Heart right ventricle (tissue), 16 donors: ENCODE measurements at regions of chr15 and their contacts with region 1.

Region 1: GRCh38 chr15:74768771-74769342 is 13.0 kb upstream of the CSK start:
- DNase-seq: peak; percentile 58 to 62
- ATAC-seq: peak; percentile 29 to 73 (median 60)
- H3K4me3 ChIP-seq: no peak overlapping the region
- H3K27ac ChIP-seq: no peak overlapping the region
- H3K4me1 ChIP-seq: peaks cover 0 to 18% (median 8%) of the 10 kb centered on the region in 9 donors
- H3K27me3 ChIP-seq: peaks cover 0 to 4% (median 0%) of the 10 kb centered on the region in 7 donors
- CTCF ChIP-seq: peak; percentile 73 to 88 (median 84)

Region 2: GRCh38 chr15:74382004-74382816 is 386.6 kb before region 1 on chr15:
- intact Hi-C with region 1: loop called in 6 of 10 experiments (anchors 5 to 10 kb)
- DNase-seq: peak; percentile 84 to 86
- ATAC-seq: peak; percentile 82 to 91 (median 86)
- H3K4me3 ChIP-seq: no peak overlapping the region
- H3K27ac ChIP-seq: no peak overlapping the region
- H3K4me1 ChIP-seq: peaks cover 8 to 44% (median 28%) of the 10 kb centered on the region in 9 donors
- H3K27me3 ChIP-seq: no peaks in the 10 kb centered on the region
- CTCF ChIP-seq: peak; percentile 90 to 98 (median 96)

Region 3: DNA sequence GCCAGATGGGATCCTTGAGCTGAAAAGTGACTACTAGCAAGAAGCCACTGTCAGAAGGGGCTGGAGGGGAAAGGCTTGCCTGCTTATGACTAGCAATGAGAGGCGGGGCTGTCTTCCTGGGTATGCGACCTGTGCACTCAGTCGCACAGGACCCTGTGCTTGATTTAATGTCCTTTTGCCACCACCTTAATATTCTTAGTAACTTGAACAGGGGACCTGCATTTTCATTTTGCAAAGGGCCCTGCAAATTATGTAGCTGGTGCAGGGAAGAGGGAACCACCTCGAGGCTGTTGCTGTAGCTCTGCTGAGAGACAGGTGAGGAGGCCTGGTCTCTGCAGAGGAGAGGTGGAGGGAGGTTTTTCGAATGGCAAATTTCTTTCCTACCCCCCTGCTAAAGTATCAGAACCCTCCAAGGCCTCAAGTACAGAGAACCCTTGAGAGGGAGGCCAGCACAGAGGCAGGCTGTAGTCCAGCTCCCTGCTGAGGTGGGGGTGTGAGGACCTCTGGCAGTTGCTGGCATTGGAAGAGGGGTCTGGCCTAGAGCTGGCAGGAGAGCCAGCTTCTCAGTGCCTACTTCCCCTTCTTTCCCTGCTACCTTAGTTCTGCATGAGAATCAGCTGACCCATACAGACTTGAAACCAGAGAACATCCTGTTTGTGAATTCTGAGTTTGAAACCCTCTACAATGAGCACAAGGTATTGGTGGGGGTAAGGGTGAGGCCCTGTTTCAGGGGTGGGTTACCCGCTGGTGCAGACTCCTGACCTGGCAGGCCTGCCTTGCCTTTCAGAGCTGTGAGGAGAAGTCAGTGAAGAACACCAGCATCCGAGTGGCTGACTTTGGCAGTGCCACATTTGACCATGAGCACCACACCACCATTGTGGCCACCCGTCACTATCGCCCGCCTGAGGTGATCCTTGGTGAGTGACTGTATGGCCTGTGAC is 141.8 kb before region 1 on chr15:
- intact Hi-C with region 1: no loop called
- DNase-seq: no peak
- ATAC-seq: no peak
- H3K4me3 ChIP-seq: no peak overlapping the region
- H3K27ac ChIP-seq: peak overlapping the region in 1 of 10 donors; percentile 12
- H3K4me1 ChIP-seq: peaks cover 0 to 16% (median 4%) of the 10 kb centered on the region in 9 donors
- H3K27me3 ChIP-seq: no peaks in the 10 kb centered on the region
- CTCF ChIP-seq: no peak

Region 4: GRCh38 chr15:74695597-74696397 is 73.1 kb before region 1 on chr15 and contains the start of gene EDC3:
- intact Hi-C with region 1: loop called in 1 of 10 experiments (anchors 10 kb)
- DNase-seq: peak; percentile 88 to 91
- ATAC-seq: peak; percentile 96 to 100 (median 98)
- H3K4me3 ChIP-seq: peak within 1 kb of the TSS; percentile 57 to 89 (median 80)
- H3K27ac ChIP-seq: peak within 1 kb of the TSS; percentile 49 to 87 (median 80)
- H3K4me1 ChIP-seq: peaks cover 0 to 32% (median 17%) of the 10 kb centered on the region in 9 donors
- H3K27me3 ChIP-seq: no peaks in the 10 kb centered on the region
- CTCF ChIP-seq: no peak
- total RNA-seq, gene EDC3: 14.4 to 18.1 (median 15.8) TPM

Region 5: GRCh38 chr15:74739905-74740304 is 29.0 kb before region 1 on chr15:
- intact Hi-C with region 1: no loop called
- DNase-seq: no peak
- ATAC-seq: no peak
- H3K4me3 ChIP-seq: no peak overlapping the region
- H3K27ac ChIP-seq: no peak overlapping the region
- H3K4me1 ChIP-seq: no peaks in the 10 kb centered on the region
- H3K27me3 ChIP-seq: peaks cover 0 to 23% (median 0%) of the 10 kb centered on the region in 7 donors
- CTCF ChIP-seq: no peak

Region 6: GRCh38 chr15:74808073-74808755 is 39.4 kb after region 1 on chr15:
- intact Hi-C with region 1: loop called in 3 of 10 experiments (anchors 5 kb)
- DNase-seq: peak in 1 of 2 donors; percentile 62
- ATAC-seq: peak in 7 of 8 donors; percentile 26 to 43 (median 36)
- H3K4me3 ChIP-seq: no peak overlapping the region
- H3K27ac ChIP-seq: no peak overlapping the region
- H3K4me1 ChIP-seq: peaks cover 0 to 8% (median 0%) of the 10 kb centered on the region in 9 donors
- H3K27me3 ChIP-seq: no peaks in the 10 kb centered on the region
- CTCF ChIP-seq: no peak

Region 7: DNA sequence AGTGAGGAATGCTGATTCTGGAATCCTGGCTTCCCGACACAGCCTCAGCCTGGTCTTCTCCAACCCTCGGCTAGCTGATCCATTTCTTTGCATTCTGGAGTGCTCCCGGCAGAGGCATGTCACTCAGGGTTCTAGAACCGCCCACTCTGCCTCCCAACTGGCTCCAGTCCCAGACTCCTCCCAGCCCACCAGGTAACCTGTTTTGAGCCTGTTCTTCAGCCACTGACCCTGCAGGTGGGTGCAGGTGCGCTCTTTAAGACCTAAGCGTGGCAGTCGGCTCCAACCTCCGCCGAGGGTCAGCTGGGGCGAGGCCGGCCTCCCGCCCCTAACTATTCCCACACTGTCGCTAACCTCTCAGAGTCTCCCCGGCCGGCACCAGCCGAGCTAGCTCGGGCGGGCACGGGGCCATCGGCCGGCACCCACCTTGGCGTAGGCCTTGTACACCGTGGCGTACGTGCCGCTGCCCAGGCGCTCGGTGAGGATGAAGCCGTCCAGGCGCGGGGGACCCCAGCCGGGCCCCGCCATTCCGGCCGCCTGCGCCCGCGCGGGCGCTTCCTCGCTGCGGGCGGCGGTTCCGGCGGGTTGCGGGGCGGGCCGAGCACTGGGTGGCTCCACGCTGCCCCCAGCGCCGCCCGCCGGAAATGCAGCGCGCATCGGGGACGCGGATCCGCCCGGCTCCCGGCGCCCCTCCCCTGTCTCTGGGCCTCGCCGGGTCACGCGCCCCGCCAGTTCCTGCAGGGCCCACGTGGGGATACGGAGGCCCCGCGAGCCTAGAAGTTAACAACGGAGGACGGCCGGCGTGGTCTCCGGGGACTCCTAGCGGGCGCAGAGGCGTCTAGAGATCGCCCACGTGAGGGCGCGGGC is 74.0 kb after region 1 on chr15 and contains the start of gene ULK3:
- intact Hi-C with region 1: loop called in 3 of 10 experiments (anchors 2 to 10 kb)
- DNase-seq: peak; percentile 90 to 92
- ATAC-seq: peak; percentile 84 to 94 (median 92)
- H3K4me3 ChIP-seq: peak within 1 kb of the TSS; percentile 77 to 98 (median 86)
- H3K27ac ChIP-seq: peak within 1 kb of the TSS; percentile 39 to 97 (median 88)
- H3K4me1 ChIP-seq: peaks cover 5 to 33% (median 23%) of the 10 kb centered on the region in 9 donors
- H3K27me3 ChIP-seq: no peaks in the 10 kb centered on the region
- CTCF ChIP-seq: peak; percentile 58 to 94 (median 75)
- total RNA-seq, gene ULK3: 21.3 to 44.0 (median 24.7) TPM

Region 8: DNA sequence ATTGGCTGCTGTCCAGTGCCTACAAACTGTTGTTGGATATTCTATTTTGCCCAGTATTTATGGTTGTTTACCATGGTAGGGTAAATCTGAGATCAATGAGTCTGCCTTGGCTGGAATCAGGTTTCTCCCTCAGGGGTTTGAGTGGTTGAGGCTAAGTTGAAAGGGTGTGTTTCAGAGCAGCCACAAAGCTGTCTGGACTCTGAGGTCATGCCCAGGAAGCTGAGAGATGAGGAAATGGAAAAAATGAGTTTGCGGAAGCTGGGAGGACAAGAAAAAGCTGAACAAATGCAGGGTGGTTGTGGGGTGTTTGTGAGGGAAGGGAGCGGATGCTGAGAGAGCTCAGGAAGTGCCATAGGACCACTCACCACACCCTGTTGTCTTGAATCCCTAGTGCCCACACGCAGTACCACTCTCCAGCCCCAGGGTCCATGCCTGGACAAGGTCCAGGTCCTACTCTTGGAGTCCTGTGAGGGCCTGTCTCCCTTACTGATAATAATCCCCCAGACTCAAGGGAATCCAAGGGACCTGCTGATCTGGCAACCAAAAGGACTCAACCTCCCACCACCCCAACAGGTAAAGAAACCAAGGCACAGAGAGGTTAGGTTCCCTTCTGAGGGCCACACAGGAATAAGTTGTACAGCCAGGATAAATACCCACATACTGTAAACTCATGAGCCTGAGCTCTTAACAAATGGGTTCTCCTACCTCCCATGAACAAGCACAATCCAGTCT is 336.1 kb after region 1 on chr15:
- intact Hi-C with region 1: no loop called
- DNase-seq: peak in 1 of 2 donors; percentile 64
- ATAC-seq: peak; percentile 44 to 83 (median 76)
- H3K4me3 ChIP-seq: no peak overlapping the region
- H3K27ac ChIP-seq: peak overlapping the region in 6 of 10 donors; percentile 19 to 92 (median 54)
- H3K4me1 ChIP-seq: peaks cover 0 to 55% (median 8%) of the 10 kb centered on the region in 9 donors
- H3K27me3 ChIP-seq: no peaks in the 10 kb centered on the region
- CTCF ChIP-seq: no peak